ENCODE measurements at regions of chr20 and their contacts with region 1.

Region 1: DNA sequence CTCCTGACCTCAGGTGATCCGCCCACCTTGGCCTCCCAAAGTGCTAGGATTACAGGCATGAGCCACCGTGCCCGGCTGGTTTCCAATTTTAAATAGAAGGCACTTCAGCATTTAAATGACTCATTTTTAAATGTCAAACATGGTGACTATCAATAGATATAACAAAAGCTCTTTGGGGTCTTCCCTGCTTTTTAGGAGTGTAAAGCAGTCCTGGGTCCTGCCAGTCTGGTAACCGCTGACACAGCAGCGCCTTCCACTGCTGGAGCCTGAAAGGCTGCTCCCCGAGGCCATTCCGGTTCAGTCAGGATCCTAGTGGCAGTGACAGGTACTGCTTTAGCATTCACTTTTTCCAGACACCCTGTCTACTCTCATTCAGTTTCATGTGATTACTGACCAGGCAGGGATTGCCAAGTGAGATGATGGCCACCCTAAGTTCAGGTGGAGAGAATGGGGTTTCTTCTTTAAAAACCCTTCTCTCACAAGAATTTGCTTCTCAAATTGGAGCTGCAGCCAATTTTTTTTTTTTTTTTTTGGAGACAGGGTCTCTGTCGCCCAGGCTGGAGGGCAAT is 5.1 kb downstream of the DIDO1 start:
- DNase-seq: no peak
- H3K4me3 ChIP-seq: no peak overlapping the region
- H3K27me3 ChIP-seq: no peaks in the 10 kb centered on the region
- CTCF ChIP-seq: peak; percentile 61

Region 2: DNA sequence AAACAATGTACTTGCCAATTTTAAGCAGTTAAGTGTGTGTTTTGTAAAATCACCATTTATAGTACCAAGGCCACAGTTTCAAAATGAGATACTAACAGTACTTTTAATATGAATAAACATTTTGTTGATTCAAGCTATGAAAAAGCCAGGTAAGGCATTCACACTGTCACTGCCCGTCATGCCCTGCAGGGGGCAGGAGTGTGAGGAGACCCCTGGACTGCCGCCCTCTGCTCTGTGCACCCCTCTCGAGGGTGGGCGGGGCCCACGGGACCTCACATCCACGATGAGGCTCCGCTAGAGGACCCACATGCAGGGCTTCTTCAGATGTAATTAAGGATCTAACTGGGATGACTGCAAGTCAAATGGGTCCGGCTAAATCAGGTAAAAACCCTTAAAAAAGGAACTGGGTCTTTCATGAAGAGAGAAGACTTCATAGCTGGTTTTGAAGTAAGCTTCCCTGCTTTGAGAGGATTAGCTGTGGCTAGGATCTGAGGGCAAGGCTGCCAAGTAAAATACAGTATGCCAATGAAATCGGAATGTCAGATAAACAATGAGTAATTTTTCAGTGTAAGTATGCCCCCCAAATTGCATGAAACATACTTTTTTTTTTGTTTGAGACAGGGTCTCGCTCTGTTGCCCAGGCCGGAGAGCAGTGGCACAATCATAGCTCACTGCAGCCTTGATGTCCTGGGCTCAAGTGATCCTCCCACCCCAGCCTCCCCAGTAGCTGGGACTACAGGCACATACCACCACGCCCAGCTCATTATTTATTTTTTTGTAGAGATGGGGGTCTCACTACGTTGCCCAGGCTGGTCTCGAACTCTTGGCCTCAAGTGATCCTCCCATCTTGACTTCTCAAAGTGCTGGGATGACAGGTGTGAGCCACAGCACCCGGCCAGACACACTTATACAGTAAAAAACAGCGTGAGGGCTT is 13.6 kb before region 1 on chr20:
- CTCF ChIA-PET with region 1: interaction called, 31 read pairs
- POLR2A ChIA-PET with region 1: no interaction called
- DNase-seq: no peak
- H3K4me3 ChIP-seq: no peak overlapping the region
- H3K27me3 ChIP-seq: no peaks in the 10 kb centered on the region
- CTCF ChIP-seq: peak; percentile 55

Region 3: DNA sequence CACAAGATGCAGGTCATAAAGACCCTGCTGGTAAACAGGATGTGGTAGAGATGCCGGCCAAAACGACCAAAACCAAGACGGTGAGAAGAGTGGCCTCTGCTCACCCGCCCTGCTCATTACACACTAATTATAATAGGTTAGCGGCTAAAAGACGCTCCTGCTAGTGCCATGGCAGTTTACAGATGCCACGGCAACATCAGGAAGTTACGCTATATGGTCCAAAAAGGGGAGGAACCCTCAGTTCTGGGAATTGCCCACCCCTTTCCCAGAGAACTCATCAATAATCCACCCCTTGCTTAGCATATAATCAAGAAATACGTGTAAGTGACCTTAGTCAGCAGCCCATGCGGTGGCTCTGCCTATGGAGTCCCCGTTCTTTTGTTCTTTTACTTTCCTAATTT is 68.0 kb after region 1 on chr20:
- CTCF ChIA-PET with region 1: no interaction called
- POLR2A ChIA-PET with region 1: no interaction called
- DNase-seq: no peak
- H3K4me3 ChIP-seq: no peak overlapping the region
- H3K27me3 ChIP-seq: peaks cover 21% of the 10 kb centered on the region
- CTCF ChIP-seq: no peak

Region 4: GRCh38 chr20:63192721-63193120 is 271.5 kb after region 1 on chr20:
- CTCF ChIA-PET with region 1: no interaction called
- POLR2A ChIA-PET with region 1: interaction called, 14 read pairs
- DNase-seq: no peak
- H3K4me3 ChIP-seq: no peak overlapping the region
- H3K27me3 ChIP-seq: no peaks in the 10 kb centered on the region
- CTCF ChIP-seq: no peak

Measured in BJ (cell line).